ENCODE measurements at regions of chr22 and their contacts with region 1.

Region 1: DNA sequence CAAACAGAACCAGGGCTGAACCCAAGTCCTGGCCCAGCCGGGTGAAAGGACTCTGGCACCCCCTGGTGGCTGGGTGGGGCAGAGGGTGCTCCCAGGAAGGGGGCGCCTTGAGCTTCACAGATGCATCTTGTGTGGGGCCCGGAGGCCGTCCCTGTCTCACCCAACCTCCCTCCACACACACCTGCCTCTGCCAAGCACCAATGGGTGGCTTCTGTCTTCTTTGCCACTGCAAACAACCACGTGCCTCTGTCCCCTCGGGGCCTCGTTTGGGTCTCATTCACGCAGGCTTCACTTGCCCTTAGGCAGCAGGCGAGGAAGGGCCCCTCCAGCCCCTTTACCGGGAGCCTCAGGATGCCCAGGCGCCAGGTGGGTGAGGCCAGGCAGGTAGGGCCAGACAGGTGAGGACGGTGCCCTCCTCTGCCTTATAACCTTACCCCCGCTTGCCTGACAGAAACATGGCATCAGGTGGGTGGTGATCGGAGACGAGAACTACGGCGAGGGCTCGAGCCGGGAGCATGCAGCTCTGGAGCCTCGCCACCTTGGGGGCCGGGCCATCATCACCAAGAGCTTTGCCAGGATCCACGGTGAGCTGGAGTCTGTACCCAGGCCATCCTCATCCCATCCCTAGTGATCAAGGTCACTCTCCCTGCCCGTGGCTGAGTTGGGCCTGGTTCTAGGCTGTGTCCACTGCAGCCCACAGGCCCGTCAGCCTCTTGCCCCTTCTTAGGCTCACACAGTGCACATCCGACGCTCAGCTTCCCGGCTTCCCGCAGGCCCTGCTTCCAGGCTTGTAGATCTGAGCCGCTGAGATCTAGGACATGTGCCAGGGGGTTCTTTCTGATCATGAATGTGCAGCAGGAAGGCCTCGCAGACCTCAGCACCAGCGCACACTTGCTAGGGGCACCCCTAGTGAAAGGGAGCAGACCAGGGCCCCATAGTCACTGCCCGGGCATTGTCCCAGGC is 17.2 kb downstream of the POLR3H start:
- DNase-seq: peak in 40 of 42 donors; percentile 43 to 87 (median 70)

Region 2: GRCh38 chr22:40922484-40923303 is 604.4 kb before region 1 on chr22:
- intact Hi-C with region 1: loop called (anchors 10 kb)
- DNase-seq: peak in 7 of 42 donors; percentile 8 to 61 (median 21)

Region 3: GRCh38 chr22:41038732-41039445 is 488.2 kb before region 1 on chr22:
- intact Hi-C with region 1: no loop called
- DNase-seq: no peak

Region 4: DNA sequence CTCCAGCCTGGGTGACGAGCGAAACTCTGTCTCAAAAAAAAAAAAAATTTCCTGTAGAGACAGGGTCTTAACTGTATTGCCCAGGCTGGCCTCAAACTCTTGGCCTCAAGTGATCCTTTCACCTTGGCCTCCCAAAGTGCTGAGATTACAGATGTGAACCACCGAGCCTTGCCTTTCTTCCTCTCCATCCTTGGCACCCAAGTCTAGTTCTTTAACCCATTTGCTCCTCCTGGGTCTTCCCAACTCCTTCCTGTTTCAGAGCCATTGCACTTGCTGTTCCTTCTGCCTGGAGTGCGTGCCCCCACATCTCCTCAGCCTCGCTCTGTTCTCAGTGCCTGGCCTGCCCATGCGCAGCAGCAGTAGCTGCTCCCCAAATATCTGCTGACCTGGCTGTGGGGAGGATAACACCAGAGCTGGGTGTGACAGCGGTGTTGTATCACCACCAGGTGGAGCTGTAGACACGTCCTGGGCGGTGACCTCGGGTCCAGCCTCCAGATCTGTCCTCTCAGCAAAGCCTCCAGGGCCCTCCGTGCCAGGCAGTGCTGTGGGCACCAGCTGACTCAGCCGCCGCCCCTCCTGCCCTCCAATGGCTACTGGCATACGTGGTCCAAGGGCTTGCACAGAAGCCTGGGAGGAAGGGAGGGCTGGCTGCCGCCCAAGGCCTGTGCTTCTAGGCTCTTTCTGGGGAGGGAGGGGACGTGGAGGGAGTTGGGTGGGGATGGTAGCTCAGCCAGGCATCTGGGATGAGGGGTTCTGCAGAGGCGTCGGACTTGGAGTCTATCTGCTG is 123.4 kb before region 1 on chr22:
- intact Hi-C with region 1: loop called (anchors 5 kb)
- DNase-seq: peak; percentile 93 to 100 (median 98)

Measured in head of caudate nucleus (tissue), 42 donors.